ENCODE measurements at regions of chr6 and their contacts with region 1.

Region 1: DNA sequence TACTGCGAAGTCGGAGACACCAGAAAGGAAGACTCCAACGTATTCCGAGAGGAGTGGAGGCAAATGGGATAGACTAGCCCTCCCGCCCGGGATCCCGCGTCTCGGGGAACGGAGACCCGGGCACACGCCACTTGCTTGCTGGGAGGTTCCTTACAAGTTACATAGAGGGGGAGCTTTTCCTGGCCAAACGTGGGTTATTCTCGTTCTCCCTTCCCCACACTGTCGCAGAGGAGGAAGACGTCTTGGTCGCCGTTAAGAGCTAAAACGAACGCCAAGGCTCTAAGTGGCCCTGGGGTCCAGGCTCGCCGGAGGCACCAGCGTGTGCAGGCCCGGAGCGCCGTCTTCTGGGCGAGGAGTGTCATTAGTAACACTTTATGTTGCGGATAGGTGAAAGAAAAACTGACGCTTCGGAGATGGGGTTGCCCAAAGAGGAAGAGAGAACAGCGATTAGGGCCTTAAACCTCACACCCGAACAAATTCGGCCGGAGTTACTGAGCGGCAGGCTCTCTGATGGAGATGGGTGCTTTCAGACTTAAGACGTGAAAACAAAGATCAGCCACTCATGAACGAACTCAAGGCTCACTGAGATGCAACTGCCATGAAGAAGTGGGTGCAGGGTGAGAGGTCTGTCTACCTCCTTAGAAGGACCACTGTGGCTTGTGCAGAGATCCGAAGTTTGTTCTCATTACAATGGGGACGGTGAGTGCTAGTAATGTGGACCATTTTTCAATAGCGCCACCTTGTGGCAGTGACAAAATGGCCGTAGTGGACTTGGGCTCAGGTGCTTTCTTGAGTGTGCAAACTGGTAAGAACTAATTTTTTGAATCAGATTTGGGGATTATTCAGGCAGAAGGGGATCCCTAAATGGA is 11.7 kb upstream of the ZNF311 start:
- DNase-seq: peak; percentile 73 to 97 (median 81)
- ATAC-seq: peak; percentile 96
- H3K4me3 ChIP-seq: no peak overlapping the region
- H3K4me1 ChIP-seq: peaks cover 4% of the 10 kb centered on the region
- CTCF ChIP-seq: peak; percentile 69

Region 2: GRCh38 chr6:28683944-28684538 is 332.8 kb before region 1 on chr6:
- intact Hi-C with region 1: loop called (anchors 5 kb)
- DNase-seq: no peak
- ATAC-seq: peak; percentile 71
- H3K4me3 ChIP-seq: no peak overlapping the region
- H3K4me1 ChIP-seq: no peaks in the 10 kb centered on the region
- CTCF ChIP-seq: no peak

Region 3: GRCh38 chr6:28838634-28839442 is 178.0 kb before region 1 on chr6:
- intact Hi-C with region 1: loop called (anchors 2 to 5 kb)
- DNase-seq: peak; percentile 85 to 88 (median 88)
- ATAC-seq: peak; percentile 86
- H3K4me3 ChIP-seq: peak overlapping the region; percentile 46
- H3K4me1 ChIP-seq: peaks cover 10% of the 10 kb centered on the region
- CTCF ChIP-seq: no peak